Panc1 (cell line): ENCODE measurements at regions of chr11 and their contacts with region 1.

Region 1: DNA sequence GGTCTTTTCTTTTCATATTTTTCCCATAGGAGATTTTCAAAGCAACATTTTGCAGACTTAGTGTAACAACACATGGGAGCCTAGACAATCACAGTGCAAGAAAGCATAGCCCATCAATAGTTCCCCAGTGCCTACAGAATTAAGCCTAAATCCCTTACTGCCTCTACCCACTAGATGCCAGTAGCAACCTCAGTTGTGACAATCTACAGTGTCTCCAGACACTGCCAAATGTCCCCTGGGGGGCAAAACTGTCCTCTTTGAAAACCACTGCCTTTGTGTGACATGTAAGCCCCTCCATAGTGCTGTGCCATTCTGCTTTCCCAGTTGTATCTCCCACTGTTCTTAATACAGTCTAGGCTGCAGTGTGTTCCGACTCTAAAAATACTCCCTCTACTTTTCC is 1329.0 kb downstream of the LRRC4C start:
- DNase-seq: no peak
- ATAC-seq: peak; percentile 81
- H3K4me3 ChIP-seq: no peak overlapping the region
- H3K27ac ChIP-seq: no peak overlapping the region
- H3K4me1 ChIP-seq: no peaks in the 10 kb centered on the region
- H3K27me3 ChIP-seq: no peaks in the 10 kb centered on the region
- CTCF ChIP-seq: peak; percentile 51

Region 2: GRCh38 chr11:40293655-40294348 is 163.4 kb after region 1 on chr11:
- CTCF ChIA-PET with region 1: no interaction called
- POLR2A ChIA-PET with region 1: no interaction called
- in situ Hi-C with region 1: no loop called
- intact Hi-C with region 1: loop called (anchors 2 kb)
- DNase-seq: peak; percentile 55
- ATAC-seq: peak; percentile 98
- H3K4me3 ChIP-seq: peak overlapping the region; percentile 61 to 65
- H3K27ac ChIP-seq: no peak overlapping the region
- H3K4me1 ChIP-seq: no peaks in the 10 kb centered on the region
- H3K27me3 ChIP-seq: peaks cover 4% of the 10 kb centered on the region
- CTCF ChIP-seq: peak; percentile 93